ENCODE measurements at regions of chr11 and their contacts with region 1.

Region 1: DNA sequence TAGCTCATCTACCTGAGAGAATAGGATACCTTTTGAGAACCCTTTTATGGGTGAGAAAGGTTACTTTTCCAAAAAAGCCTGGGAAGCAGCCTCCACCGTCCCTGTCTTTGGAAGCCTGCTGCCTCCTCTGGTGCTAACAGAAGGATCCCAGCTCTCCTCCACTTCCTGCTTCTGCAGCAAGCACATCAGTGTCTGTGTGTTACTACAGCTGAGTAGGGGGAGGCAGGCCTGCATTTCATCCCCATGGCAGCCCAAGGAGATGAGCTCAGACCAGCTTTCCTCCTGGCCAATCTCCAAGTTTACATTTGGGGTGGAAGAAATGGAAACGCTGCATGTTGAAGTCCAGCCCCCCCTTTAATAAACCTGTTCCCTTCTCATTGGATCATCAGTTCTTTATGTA is 7.4 kb upstream of the CCDC34 start:
- DNase-seq: no peak
- ATAC-seq: no peak
- H3K4me3 ChIP-seq: no peak overlapping the region
- H3K27ac ChIP-seq: no peak overlapping the region
- H3K4me1 ChIP-seq: peaks cover 27% of the 10 kb centered on the region
- H3K27me3 ChIP-seq: no peaks in the 10 kb centered on the region
- CTCF ChIP-seq: no peak
- EP300 ChIP-seq: no peak
- POLR2A ChIP-seq: no peak
- RAD21 ChIP-seq: no peak

Region 2: DNA sequence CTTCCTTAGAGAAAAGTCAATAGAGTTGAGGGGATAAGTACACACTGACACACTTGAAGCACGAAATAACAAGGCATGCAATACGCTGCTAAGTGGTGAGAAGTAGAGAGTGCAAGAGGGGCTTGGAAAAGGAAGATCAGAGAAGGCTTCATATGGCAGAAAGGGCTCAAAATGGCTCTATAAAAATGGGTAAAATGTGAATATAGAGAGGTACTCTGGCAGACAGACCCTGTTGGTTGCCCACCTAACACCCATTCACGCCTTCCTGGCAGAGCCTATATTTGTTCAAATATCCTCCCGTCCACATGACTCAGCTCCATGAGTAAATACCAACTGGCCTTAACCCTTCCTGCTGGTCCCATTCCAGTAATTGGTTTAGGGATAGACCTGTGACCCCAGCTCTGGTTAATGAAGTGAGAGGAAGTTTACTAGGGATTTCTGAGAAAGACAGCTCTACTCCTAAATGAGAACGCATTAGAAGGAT is 31.5 kb after region 1 on chr11:
- CTCF ChIA-PET with region 1: no interaction called
- POLR2A ChIA-PET with region 1: interaction called, 65 read pairs
- in situ Hi-C with region 1: no loop called
- intact Hi-C with region 1: no loop called
- DNase-seq: peak; percentile 85
- ATAC-seq: peak; percentile 87
- H3K4me3 ChIP-seq: peak overlapping the region in 2 of 3 experiments; percentile 6; a peak in 1 of 6 replicates
- H3K27ac ChIP-seq: peak overlapping the region; percentile 68
- H3K4me1 ChIP-seq: peaks cover 93% of the 10 kb centered on the region
- H3K27me3 ChIP-seq: no peaks in the 10 kb centered on the region
- CTCF ChIP-seq: no peak
- EP300 ChIP-seq: peak in 1 of 2 experiments; percentile 85; a peak in 2 of 4 replicates
- POLR2A ChIP-seq: no peak
- RAD21 ChIP-seq: no peak